GM10248 (cell line): ENCODE measurements at regions of chr10 and their contacts with region 1.

Region 1: GRCh38 chr10:116457488-116457887 is 29.8 kb downstream of the PNLIPRP3 start:
- DNase-seq: no peak
- CTCF ChIP-seq: no peak

Region 2: DNA sequence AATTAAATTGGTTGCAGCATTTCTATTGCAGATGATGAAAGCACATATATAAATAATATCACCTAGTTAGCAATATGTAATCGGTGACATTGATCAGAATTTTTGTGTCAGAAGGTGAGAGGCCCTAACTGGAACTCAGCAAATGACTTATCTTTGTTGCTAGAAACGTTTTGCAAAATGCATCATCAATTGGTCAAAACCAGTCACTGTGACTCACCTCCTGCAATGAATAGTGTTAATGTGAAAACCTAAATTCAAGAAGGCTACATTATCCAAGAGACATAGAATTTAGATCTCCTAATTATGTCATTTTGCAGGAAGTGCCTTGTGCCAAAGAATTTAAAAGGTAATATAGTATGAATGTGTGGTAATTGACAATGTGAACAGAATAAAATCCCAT is 39.7 kb before region 1 on chr10:
- CTCF ChIA-PET with region 1: no interaction called
- POLR2A ChIA-PET with region 1: no interaction called
- DNase-seq: no peak
- CTCF ChIP-seq: no peak

Region 3: DNA sequence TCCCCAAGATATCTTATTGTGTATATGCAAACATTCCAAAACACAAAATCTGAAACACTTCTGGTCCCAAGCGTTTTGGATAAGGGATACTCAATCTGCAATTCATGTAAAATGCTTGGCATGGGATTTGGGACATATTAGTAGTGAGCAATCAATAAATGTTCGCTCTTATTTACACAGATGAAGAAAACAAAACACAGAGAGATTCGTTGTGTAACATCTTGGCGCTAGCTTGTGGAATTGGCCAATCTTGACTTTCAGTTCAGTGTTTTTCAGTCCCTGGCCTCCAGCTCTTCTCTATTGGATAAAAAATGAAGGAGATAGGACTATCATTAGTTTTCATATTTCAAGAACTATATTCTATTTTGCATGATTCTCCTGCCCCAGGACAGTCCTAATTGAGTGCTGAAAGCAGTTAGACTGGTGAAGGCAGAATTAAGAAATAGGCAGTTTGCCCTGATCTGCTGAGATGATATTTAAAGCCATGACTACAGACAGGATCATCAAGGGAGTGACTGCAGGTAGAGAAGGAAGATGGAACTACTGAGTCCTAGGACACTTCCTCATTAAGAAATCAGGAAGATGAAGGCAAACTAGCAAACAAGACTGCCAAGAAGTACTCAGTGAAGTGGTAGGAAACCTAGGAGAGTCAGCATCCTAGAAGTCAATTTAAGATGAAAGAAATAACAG is 28.1 kb before region 1 on chr10:
- CTCF ChIA-PET with region 1: no interaction called
- POLR2A ChIA-PET with region 1: no interaction called
- DNase-seq: no peak
- CTCF ChIP-seq: no peak

Region 4: DNA sequence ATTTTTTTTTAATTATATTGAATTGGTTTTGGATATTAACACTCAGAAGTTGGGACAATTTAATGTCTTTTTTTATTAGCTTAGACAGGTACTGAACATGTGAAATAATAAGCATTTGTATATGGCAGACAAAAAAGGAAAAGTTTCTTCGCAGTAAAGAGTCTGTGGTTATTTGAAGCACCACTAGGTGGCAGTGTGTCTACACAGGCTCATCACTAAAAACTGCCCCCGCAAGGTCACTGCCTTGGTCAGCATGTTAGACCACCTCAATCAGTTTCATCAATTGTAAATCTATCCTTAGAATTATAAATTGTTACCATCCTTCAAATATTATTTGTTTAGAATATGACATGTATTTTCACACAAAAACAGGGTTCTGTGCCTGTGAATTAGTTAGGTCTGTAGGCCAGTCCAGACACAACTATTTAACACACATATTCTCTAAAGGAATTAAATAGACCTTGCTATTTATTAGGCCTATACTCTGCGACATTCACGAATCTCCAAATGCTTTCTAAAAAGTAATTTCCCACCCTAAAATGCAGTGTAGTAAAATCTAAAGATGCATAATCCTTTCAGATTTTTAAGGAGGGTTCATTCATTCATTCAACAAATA is 12.9 kb before region 1 on chr10:
- CTCF ChIA-PET with region 1: interaction called, 14 read pairs
- POLR2A ChIA-PET with region 1: no interaction called
- DNase-seq: peak; percentile 18
- CTCF ChIP-seq: peak; percentile 60

Region 5: DNA sequence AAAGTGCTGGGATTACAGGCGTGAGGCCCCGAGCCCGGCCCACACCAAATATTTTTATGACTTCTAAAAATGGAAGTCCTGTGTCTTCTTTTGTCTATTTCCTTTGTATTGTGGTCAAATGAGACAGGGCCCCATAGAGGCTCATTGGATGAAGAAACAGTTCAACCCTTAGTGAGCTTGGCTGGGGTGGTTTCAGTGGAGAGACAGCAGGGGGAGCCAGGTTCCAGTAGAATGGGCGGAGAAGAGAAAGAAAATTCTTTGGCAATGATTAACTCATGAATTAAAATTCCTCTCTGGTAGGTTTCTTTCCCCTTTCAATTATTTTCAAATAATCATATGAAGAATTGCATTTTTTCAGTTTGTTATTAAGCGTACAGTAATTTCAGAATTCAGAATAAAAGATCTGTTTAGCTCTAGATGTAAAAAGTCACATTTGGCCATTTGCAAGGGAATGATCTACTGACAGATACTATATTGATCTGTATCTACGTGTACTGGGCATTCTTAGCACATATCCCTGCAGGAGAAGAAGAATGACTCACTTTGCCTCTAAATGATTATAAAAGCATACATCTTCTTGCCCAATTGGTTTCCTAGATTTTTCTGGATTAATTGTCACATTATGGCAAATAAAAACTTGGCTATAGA is 13.4 kb after region 1 on chr10:
- CTCF ChIA-PET with region 1: no interaction called
- POLR2A ChIA-PET with region 1: no interaction called
- DNase-seq: no peak
- CTCF ChIP-seq: no peak